ENCODE measurements at regions of chr10 and their contacts with region 1.

Region 1: GRCh38 chr10:66931340-66931948 is 5.6 kb downstream of the LRRTM3 start:
- DNase-seq: peak; percentile 72
- H3K4me3 Mint-ChIP-seq: no peak overlapping the region
- H3K27ac Mint-ChIP-seq: no peak overlapping the region
- H3K4me1 Mint-ChIP-seq: no peaks in the 10 kb centered on the region
- H3K27me3 Mint-ChIP-seq: peaks cover 52% of the 10 kb centered on the region
- CTCF ChIP-seq: peak; percentile 86

Region 2: DNA sequence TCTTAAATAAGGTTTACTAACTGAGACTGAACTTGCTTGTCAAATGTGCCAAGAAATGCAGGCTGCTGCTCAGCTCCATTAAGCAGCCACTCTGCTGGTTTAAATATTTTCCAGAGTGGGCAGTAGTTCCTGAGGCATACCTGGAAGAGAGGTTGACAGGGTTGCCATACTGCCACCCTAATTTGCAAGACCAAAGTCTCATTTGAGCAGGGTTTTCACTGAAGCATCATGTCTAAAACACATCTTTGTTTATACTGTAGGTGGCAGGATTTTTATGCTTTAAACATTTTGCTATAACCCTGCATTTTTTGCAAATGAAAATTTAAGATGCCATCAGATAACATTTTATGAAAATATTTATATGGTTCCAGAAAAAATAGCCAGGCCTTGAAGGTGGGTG is 623.6 kb before region 1 on chr10:
- CTCF ChIA-PET with region 1: no interaction called
- POLR2A ChIA-PET with region 1: no interaction called
- intact Hi-C with region 1: loop called (anchors 5 kb)
- DNase-seq: peak; percentile 9
- H3K4me3 Mint-ChIP-seq: no peak overlapping the region
- H3K27ac Mint-ChIP-seq: no peak overlapping the region
- H3K4me1 Mint-ChIP-seq: no peaks in the 10 kb centered on the region
- H3K27me3 Mint-ChIP-seq: no peaks in the 10 kb centered on the region
- CTCF ChIP-seq: peak; percentile 22

Region 3: GRCh38 chr10:67088036-67088435 is 156.6 kb after region 1 on chr10:
- CTCF ChIA-PET with region 1: no interaction called
- POLR2A ChIA-PET with region 1: no interaction called
- intact Hi-C with region 1: no loop called
- DNase-seq: no peak
- H3K4me3 Mint-ChIP-seq: no peak overlapping the region
- H3K27ac Mint-ChIP-seq: no peak overlapping the region
- H3K4me1 Mint-ChIP-seq: no peaks in the 10 kb centered on the region
- H3K27me3 Mint-ChIP-seq: peaks cover 86% of the 10 kb centered on the region
- CTCF ChIP-seq: no peak

Measured in MCF 10A (cell line).